Activated CD4-positive, alpha-beta memory T cell treated with anti-CD3 and anti-CD28 coated beads for 36 hours (primary cell): ENCODE measurements at regions of chr3 and their contacts with region 1.

Region 1: GRCh38 chr3:187738331-187739093 is 6.8 kb downstream of the BCL6 start:
- DNase-seq: peak; percentile 82
- H3K4me3 Mint-ChIP-seq: peak overlapping the region; percentile 90
- H3K27ac Mint-ChIP-seq: peak overlapping the region; percentile 99
- H3K4me1 Mint-ChIP-seq: peaks cover 44% of the 10 kb centered on the region
- H3K27me3 Mint-ChIP-seq: no peaks in the 10 kb centered on the region

Region 2: GRCh38 chr3:187706971-187707370 is 31.5 kb before region 1 on chr3:
- CTCF ChIA-PET with region 1: no interaction called
- POLR2A ChIA-PET with region 1: no interaction called
- intact Hi-C with region 1: no loop called
- DNase-seq: no peak
- H3K4me3 Mint-ChIP-seq: no peak overlapping the region
- H3K27ac Mint-ChIP-seq: no peak overlapping the region
- H3K4me1 Mint-ChIP-seq: no peaks in the 10 kb centered on the region
- H3K27me3 Mint-ChIP-seq: no peaks in the 10 kb centered on the region

Region 3: GRCh38 chr3:188061133-188061532 is 322.6 kb after region 1 on chr3:
- CTCF ChIA-PET with region 1: interaction called, 10 read pairs
- POLR2A ChIA-PET with region 1: no interaction called
- intact Hi-C with region 1: loop called (anchors 1 kb)
- DNase-seq: peak; percentile 81
- H3K4me3 Mint-ChIP-seq: peak overlapping the region; percentile 44
- H3K27ac Mint-ChIP-seq: peak overlapping the region; percentile 80
- H3K4me1 Mint-ChIP-seq: peaks cover 35% of the 10 kb centered on the region
- H3K27me3 Mint-ChIP-seq: no peaks in the 10 kb centered on the region

Region 4: DNA sequence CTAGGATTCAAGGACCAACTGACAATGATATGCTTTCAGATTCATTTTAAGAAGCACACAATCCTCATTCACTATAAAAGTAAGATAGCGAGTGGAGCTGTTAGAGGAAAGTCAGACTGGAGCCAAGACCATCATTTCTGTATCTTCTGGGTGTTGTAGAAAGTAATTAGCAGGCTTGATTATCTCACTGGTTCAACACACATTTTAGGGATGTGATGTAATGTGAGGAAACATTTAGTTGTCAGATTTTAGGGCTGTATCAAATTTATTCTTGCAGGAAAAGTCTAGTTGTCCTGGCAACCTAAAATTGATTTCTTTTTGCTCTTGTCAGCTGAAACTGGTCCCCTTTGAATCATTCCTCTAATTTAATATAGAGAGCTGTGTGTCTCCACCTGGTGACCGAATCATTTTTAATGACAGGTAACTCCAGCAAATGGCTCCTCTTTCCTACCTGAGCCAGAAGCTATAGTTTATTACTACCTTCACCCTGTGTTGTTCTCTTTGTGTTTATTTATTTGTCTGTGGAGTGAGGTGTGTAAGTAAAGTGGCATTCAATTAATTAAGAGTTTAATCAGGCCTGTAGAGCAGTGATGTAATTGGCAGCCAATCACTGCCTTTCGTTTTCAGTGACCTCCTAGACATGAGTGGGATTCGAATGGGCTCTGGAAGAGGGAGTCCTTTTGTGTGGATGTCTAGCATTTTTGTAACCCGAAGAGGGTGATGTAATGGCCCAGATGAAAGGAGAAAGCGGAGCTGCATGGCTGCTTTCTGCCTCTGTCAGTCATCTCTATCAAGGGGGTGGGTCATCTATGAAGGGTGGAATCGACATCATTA is 541.2 kb after region 1 on chr3:
- CTCF ChIA-PET with region 1: interaction called, 57 read pairs
- POLR2A ChIA-PET with region 1: interaction called, 22 read pairs
- intact Hi-C with region 1: loop called (anchors 1 kb)
- DNase-seq: no peak
- H3K4me3 Mint-ChIP-seq: no peak overlapping the region
- H3K27ac Mint-ChIP-seq: no peak overlapping the region
- H3K4me1 Mint-ChIP-seq: peaks cover 32% of the 10 kb centered on the region
- H3K27me3 Mint-ChIP-seq: no peaks in the 10 kb centered on the region

Region 5: DNA sequence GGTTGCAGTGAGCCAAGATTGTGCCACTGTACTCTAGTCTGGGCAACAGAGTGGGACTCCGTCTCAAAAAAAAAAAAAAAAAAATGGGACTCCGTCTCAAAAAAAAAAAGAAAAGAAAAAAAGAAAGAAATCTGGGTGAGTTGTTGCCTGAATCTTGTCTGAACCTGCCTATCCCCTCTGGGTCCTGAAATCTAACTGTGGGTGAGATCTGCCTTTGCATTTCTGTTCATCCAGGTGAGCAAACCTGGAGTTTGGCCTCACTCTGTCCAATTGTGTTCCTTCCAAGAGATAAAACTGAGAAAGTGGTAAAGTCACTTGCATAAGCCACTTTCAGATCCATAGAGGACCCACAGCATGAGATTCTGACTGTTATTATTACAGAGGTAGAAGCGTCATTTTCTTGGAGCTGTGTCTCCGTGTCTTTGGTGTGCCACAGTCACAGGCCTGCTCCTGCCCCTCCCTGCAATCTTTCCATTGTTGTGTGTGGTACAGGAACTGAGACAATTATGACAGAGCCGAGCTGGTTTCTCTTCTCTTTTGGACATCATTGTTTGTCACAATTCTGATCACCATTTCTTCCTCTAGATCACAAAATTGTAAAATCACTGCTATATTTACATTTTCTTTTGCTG is 651.3 kb after region 1 on chr3:
- CTCF ChIA-PET with region 1: interaction called, 4 read pairs
- POLR2A ChIA-PET with region 1: no interaction called
- intact Hi-C with region 1: loop called (anchors 2 kb)
- DNase-seq: peak; percentile 74
- H3K4me3 Mint-ChIP-seq: no peak overlapping the region
- H3K27ac Mint-ChIP-seq: peak overlapping the region; percentile 50
- H3K4me1 Mint-ChIP-seq: peaks cover 27% of the 10 kb centered on the region
- H3K27me3 Mint-ChIP-seq: no peaks in the 10 kb centered on the region

Region 6: DNA sequence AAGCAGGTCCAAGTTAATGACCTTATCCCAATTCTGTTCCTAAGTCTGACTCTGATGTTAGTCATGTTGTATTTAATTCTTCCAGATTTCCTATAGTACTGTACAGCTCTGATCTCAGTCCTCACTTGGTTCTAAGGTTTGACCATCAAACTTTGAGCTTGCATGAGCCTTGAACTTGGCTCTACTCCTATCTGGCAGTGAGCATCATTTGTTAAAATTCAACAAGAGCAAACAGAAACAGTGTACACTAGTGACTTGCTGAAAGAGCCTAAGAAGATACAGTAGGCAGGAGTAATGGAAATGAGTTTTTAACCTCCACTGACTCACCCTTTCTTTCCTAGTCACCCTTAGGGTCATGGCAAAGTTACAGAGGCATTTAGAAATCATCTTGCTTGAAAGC is 982.1 kb after region 1 on chr3:
- CTCF ChIA-PET with region 1: interaction called, 9 read pairs
- POLR2A ChIA-PET with region 1: interaction called, 3 read pairs
- intact Hi-C with region 1: loop called (anchors 1 kb)
- DNase-seq: no peak
- H3K4me3 Mint-ChIP-seq: no peak overlapping the region
- H3K27ac Mint-ChIP-seq: no peak overlapping the region
- H3K4me1 Mint-ChIP-seq: peaks cover 39% of the 10 kb centered on the region
- H3K27me3 Mint-ChIP-seq: peaks cover 12% of the 10 kb centered on the region

Region 7: DNA sequence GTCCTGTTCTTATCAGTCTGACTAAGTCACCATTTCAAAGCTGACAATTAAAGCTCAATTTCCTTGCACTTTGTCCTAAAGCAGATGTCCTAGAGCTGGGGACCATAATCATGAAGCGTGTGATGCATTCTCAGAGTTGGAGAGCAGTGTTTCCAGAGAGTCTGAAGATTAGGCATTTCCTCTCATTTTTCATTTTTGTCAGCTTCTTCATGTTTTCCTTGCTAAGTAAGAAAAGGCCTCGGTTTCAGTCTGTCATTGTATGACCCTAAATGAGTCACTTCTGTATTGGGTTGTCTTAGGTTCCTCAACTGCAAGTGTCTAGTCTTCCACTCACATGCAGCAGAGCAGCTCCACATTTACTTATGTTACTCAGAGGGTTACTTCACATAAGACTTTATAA is 1176.0 kb after region 1 on chr3:
- CTCF ChIA-PET with region 1: interaction called, 41 read pairs
- POLR2A ChIA-PET with region 1: interaction called, 7 read pairs
- intact Hi-C with region 1: loop called (anchors 1 kb)
- DNase-seq: peak; percentile 23
- H3K4me3 Mint-ChIP-seq: no peak overlapping the region
- H3K27ac Mint-ChIP-seq: peak overlapping the region; percentile 86
- H3K4me1 Mint-ChIP-seq: peaks cover 43% of the 10 kb centered on the region
- H3K27me3 Mint-ChIP-seq: no peaks in the 10 kb centered on the region

Region 8: DNA sequence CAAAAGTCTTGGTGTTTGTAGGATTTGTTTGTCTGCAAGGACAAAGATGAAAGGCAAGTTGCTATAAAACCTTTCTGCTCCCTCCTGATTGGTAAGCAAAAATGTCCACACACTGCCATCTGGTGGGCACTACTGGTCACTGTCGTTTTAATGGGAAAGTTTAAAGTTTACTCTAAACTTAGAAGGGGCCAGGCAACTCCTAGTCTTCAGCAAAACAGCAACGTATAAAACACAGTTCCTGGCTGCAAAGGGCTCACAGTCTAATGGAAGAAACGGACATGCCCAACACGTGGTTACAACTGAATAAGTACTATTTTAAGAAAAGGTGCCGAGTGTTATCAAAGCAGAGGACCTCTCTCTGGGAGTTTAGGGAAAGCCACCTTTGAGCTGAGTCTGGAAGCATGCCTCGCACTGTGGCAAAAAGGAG is 1409.6 kb after region 1 on chr3:
- CTCF ChIA-PET with region 1: interaction called, 50 read pairs
- POLR2A ChIA-PET with region 1: no interaction called
- intact Hi-C with region 1: loop called (anchors 1 kb)
- DNase-seq: peak; percentile 77
- H3K4me3 Mint-ChIP-seq: no peak overlapping the region
- H3K27ac Mint-ChIP-seq: no peak overlapping the region
- H3K4me1 Mint-ChIP-seq: peaks cover 19% of the 10 kb centered on the region
- H3K27me3 Mint-ChIP-seq: no peaks in the 10 kb centered on the region